ENCODE measurements at regions of chr17 and their contacts with region 1.

Region 1: GRCh38 chr17:68777243-68777855 is 176.2 kb upstream of the FAM20A start:
- DNase-seq: peak; percentile 97
- H3K4me3 ChIP-seq: no peak overlapping the region
- H3K27ac ChIP-seq: peak overlapping the region; percentile 92
- H3K4me1 ChIP-seq: peaks cover 51% of the 10 kb centered on the region
- H3K27me3 ChIP-seq: no peaks in the 10 kb centered on the region
- CTCF ChIP-seq: peak; percentile 83

Region 2: DNA sequence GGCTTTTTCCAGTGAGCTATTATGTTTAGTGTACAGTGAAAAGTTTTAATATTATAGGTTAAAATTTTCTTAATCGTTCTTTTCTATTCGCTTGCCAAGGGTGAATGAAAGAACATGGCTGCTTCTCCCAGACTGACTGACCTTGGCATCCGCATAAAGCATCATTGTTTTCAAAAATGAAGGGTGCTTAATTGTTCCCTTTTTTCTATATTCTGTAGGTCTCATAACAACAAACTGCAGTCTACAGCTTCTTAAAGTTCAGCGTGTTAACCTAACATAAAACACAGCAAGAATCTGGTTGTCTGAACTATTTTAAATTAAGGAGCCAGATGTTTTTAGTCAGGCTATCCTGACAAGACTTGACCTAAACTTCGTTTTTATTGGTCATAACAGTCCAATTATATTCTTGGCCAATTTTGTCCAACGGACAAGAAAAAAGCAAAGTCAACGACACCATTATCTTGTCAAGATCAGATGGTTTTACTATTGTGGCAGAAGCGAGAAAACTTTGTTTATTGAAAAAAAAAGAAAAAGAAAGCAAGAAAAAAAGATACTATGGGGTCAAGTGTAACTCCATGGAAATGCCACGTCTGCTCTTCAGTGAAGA is 795.2 kb before region 1 on chr17:
- CTCF ChIA-PET with region 1: no interaction called
- POLR2A ChIA-PET with region 1: no interaction called
- intact Hi-C with region 1: no loop called
- DNase-seq: no peak
- H3K4me3 ChIP-seq: no peak overlapping the region
- H3K27ac ChIP-seq: no peak overlapping the region
- H3K4me1 ChIP-seq: no peaks in the 10 kb centered on the region
- H3K27me3 ChIP-seq: no peaks in the 10 kb centered on the region
- CTCF ChIP-seq: no peak

Region 3: DNA sequence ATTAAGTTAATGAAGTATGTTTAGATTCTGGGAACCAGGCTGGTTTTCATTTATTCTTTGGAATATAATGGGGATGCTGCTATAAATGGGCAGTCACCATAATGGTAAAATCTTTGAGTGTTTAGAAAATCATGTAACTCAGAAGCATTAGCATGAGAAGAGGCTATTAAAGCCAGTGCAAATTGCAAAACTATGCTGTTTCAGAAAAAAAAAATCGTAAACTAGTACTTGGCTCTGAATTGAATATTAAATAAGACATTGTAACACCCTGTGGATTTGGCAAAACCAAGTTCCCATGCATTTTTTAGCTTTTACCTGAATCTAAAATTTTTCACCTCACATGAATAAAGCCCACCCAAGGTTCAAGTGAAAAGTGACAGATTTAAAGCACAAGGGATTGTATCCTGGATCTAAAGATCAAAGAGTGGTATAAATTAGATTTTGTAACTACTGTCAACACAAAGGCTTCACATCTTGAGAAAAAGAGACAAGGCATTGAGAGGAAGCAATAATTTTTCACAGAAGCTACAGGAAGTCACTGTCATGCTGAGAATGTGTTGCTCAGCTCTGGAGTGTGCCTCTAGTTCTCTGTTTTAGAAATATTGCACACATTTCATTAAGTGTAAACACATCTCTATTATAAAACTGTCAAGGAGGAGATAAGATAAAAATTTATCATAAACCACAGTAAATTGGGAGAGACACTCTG is 35.7 kb after region 1 on chr17:
- CTCF ChIA-PET with region 1: no interaction called
- POLR2A ChIA-PET with region 1: interaction called, 3 read pairs
- intact Hi-C with region 1: loop called (anchors 1 kb)
- DNase-seq: peak; percentile 97
- H3K4me3 ChIP-seq: no peak overlapping the region
- H3K27ac ChIP-seq: peak overlapping the region; percentile 60
- H3K4me1 ChIP-seq: peaks cover 45% of the 10 kb centered on the region
- H3K27me3 ChIP-seq: no peaks in the 10 kb centered on the region
- CTCF ChIP-seq: no peak

Region 4: GRCh38 chr17:68909066-68909465 is 131.7 kb after region 1 on chr17:
- CTCF ChIA-PET with region 1: no interaction called
- POLR2A ChIA-PET with region 1: interaction called, 4 read pairs
- intact Hi-C with region 1: loop called (anchors 2 kb)
- DNase-seq: peak; percentile 74
- H3K4me3 ChIP-seq: no peak overlapping the region
- H3K27ac ChIP-seq: peak overlapping the region; percentile 77
- H3K4me1 ChIP-seq: peaks cover 22% of the 10 kb centered on the region
- H3K27me3 ChIP-seq: no peaks in the 10 kb centered on the region
- CTCF ChIP-seq: no peak

Region 5: GRCh38 chr17:68972119-68972704 is 194.9 kb after region 1 on chr17:
- CTCF ChIA-PET with region 1: no interaction called
- POLR2A ChIA-PET with region 1: no interaction called
- intact Hi-C with region 1: loop called (anchors 2 kb)
- DNase-seq: peak; percentile 75
- H3K4me3 ChIP-seq: no peak overlapping the region
- H3K27ac ChIP-seq: no peak overlapping the region
- H3K4me1 ChIP-seq: peaks cover 9% of the 10 kb centered on the region
- H3K27me3 ChIP-seq: no peaks in the 10 kb centered on the region
- CTCF ChIP-seq: peak; percentile 83

Region 6: DNA sequence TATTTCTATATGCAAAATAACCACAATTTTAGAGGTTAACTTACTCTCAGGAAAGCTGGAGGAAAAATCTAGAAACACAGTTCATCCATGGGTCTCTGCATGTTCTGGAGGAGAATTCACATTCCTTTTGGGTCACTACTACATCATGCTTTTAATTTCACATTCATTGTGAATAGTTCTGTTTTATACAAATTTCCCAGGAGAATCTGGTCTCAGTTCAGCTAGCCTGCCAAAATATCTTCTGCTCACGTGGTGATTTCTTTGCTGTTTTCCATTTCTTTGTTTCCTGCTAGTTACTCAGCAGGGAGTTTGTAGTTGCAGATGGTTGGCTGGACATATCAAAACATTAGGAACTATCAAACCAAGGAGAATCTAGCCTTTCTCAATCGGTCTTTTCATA is 283.5 kb after region 1 on chr17 and contains the start of gene ABCA9:
- CTCF ChIA-PET with region 1: no interaction called
- POLR2A ChIA-PET with region 1: no interaction called
- intact Hi-C with region 1: loop called (anchors 5 kb)
- DNase-seq: peak; percentile 73
- H3K4me3 ChIP-seq: no peak within 1 kb of the TSS
- H3K27ac ChIP-seq: peak within 1 kb of the TSS; percentile 55
- H3K4me1 ChIP-seq: peaks cover 35% of the 10 kb centered on the region
- H3K27me3 ChIP-seq: no peaks in the 10 kb centered on the region
- CTCF ChIP-seq: no peak
- total RNA-seq, gene ABCA9: 1.4 and 2.1 TPM in 2 replicates

Region 7: DNA sequence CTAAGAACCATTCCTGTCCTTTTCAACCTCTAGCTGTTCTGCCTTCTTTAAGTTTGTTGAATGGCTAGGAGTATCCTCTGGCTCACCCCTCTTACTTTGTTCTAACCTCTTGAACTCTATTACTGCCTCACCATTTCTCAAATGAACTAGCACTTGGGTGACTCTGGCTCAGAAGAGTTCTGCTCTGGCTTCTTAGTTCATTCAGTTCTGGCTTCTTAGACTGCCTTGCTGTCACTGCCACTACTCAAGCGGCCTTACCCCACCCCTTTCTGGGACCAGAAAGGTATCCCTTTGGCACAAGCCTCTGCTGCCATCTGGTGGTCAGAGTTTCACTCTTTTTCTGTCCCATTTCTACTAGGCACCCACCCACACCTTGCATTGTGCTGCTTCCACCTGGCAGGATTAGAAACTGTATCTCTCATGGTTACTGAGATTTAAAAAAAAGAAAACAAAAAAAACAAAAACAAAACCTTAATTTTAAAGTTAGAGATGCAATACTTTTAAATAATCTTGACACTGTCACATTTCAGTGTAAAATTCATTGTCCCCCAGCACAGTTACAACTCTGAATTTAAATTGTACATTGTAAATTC is 458.1 kb after region 1 on chr17:
- CTCF ChIA-PET with region 1: interaction called, 9 read pairs
- POLR2A ChIA-PET with region 1: no interaction called
- intact Hi-C with region 1: loop called (anchors 1 kb)
- DNase-seq: peak; percentile 94
- H3K4me3 ChIP-seq: no peak overlapping the region
- H3K27ac ChIP-seq: peak overlapping the region; percentile 39
- H3K4me1 ChIP-seq: peaks cover 16% of the 10 kb centered on the region
- H3K27me3 ChIP-seq: no peaks in the 10 kb centered on the region
- CTCF ChIP-seq: peak; percentile 84

Region 8: DNA sequence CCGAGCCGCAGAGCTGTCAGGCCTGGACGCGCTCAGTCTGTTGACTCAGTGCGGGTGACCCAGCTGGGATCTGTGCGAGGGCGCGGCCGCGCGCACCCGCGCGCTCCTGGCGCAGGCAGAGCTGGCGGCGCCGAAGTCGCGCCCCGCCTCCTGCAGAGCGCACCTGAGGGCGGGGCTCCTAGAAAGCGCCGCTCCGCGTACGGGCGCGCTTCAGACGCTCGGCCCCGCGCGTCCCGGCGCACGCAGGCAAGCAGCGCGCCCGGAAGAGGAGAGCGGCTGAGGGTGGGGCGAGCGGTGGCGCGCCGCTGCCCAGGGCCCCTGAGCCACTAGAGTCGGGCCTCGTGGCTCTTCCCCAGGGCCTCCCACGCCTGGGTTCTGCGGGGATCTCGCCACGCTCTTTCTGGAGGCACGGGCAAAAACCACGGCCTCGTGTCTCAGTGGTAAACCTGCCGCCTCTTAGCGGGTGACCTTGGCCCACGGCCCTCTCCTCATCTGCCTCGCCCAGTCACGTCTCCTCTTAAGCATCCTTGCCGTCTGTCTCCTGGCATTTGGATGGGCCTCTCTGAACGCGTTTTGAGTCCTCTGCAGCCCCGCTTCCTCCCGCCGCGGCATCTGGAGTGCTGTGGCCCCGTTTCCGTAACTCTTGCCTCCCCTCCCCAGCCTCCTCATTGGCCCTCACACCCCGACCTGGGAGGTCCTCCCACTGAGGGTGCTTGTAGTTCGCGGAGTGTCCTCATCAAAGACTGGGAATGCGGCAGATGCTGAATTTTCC is 549.9 kb after region 1 on chr17 and contains the start of gene ABCA5:
- CTCF ChIA-PET with region 1: no interaction called
- POLR2A ChIA-PET with region 1: no interaction called
- intact Hi-C with region 1: no loop called
- DNase-seq: peak; percentile 90
- H3K4me3 ChIP-seq: peak within 1 kb of the TSS; percentile 75
- H3K27ac ChIP-seq: peak within 1 kb of the TSS; percentile 17
- H3K4me1 ChIP-seq: peaks cover 5% of the 10 kb centered on the region
- H3K27me3 ChIP-seq: no peaks in the 10 kb centered on the region
- CTCF ChIP-seq: no peak
- total RNA-seq, gene ABCA5: 11.7 and 14.7 TPM in 2 replicates

Measured in A673 (cell line).